ENCODE measurements at regions of chr4 and their contacts with region 1.

Region 1: DNA sequence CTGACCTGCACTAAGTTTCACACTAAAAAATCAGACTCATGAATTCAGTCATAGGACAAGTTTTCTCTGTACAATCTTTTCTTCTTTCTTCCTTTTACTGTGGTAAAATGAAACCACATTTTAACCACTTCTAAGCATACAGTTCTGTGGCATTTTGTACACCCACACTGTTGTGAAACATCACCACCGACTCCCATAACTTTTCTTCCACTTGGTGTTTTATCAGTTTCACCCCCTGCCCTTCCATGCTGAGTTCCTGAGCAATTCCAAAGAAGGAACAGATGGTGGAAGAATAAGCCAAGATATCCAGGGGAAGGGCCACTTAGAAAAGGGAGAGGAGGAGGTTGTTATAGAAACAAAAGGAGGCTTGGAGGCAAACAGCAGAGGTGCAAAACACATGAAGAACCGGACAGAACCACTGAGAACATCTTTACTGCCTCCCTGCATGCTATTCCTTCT is 22.6 kb downstream of the SLC25A4 start:
- DNase-seq: no peak
- H3K4me3 Mint-ChIP-seq: no peak overlapping the region
- H3K27ac Mint-ChIP-seq: peak overlapping the region; percentile 80
- H3K4me1 Mint-ChIP-seq: peaks cover 20% of the 10 kb centered on the region
- H3K27me3 Mint-ChIP-seq: peaks cover 32% of the 10 kb centered on the region

Region 2: GRCh38 chr4:183747931-183748670 is 1417.5 kb before region 1 on chr4:
- intact Hi-C with region 1: no loop called
- DNase-seq: no peak
- H3K4me3 Mint-ChIP-seq: no peak overlapping the region
- H3K27ac Mint-ChIP-seq: no peak overlapping the region
- H3K4me1 Mint-ChIP-seq: no peaks in the 10 kb centered on the region
- H3K27me3 Mint-ChIP-seq: peaks cover 6% of the 10 kb centered on the region

Region 3: GRCh38 chr4:185142912-185143595 is 22.6 kb before region 1 on chr4 and contains the start of gene SLC25A4:
- intact Hi-C with region 1: loop called (anchors 1 kb)
- DNase-seq: peak; percentile 56
- H3K4me3 Mint-ChIP-seq: peak within 1 kb of the TSS; percentile 82
- H3K27ac Mint-ChIP-seq: no peak within 1 kb of the TSS
- H3K4me1 Mint-ChIP-seq: peaks cover 12% of the 10 kb centered on the region
- H3K27me3 Mint-ChIP-seq: peaks cover 71% of the 10 kb centered on the region
- total RNA-seq, gene SLC25A4: 2.3 and 2.7 TPM in 2 replicates

Region 4: DNA sequence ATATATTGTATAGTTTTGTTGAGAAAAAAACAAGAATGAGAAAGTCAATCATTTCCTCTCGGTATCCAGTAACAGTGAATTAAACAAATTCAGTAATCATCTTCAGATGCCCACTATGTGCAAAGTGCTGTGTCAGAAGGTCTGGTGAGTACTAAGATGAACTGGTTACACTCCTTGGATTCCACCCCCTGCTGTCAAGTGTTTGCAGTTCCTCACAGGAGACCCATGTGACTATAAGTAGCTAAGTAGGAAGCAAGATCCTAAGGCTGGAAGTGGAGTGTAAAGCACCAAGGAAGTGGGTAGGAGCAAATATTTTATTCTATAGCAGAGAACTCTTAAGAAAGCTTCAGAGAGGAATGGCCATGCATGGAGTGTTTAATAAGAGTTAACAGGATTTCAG is 117.3 kb after region 1 on chr4:
- intact Hi-C with region 1: no loop called
- DNase-seq: no peak
- H3K4me3 Mint-ChIP-seq: no peak overlapping the region
- H3K27ac Mint-ChIP-seq: no peak overlapping the region
- H3K4me1 Mint-ChIP-seq: peaks cover 26% of the 10 kb centered on the region
- H3K27me3 Mint-ChIP-seq: no peaks in the 10 kb centered on the region

Measured in activated T-helper 1 cell treated with anti-CD3 and anti-CD28 coated beads, Interleukin-12 subunit alpha, Interleukin-12 subunit beta, Interleukin-2, Interleukin-4 antibody, amounts not matched to agents 30 ng/mL and 10 ng/mL and 1 ng/mL, durations not matched to agents 14 hours and 24 hours and 36 hours (primary cell).